Kidney (tissue), 22 donors: ENCODE measurements at regions of chr13 and their contacts with region 1.

Region 1: DNA sequence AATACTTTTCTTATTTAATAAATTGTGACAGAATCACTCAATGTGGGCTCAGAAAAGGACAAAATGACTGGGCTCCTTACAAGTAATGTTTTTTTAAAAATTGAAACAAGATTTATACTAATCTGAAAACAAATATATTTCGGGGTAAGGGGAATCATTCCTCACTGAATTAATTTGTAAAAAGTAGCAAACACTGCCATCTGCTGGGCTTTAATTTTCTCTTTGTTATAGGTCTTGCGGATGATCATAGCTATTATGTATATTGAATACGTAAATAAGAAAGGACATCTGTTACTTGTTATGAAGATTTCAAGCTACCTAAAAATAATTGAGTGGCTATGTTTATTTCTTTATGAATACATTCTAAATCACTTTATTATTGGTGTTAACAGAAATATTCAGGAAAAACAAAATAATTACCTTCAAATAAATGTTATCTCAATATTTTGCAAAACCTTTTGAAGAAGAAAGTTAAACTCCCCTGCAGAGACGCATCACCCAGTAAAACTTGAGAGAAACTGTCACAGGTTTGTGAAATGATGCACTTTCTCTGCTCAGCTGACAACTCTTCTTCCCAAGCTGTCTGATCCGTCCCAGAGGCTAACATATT is 17.8 kb upstream of the ENOX1 start:
- DNase-seq: peak in 2 of 5 donors; percentile 85 to 88
- H3K4me3 ChIP-seq: no peak overlapping the region
- H3K27ac ChIP-seq: no peak overlapping the region
- H3K4me1 ChIP-seq: no peaks in the 10 kb centered on the region
- H3K27me3 ChIP-seq: no peaks in the 10 kb centered on the region
- CTCF ChIP-seq: peak; percentile 53

Region 2: GRCh38 chr13:43303033-43303729 is 501.4 kb before region 1 on chr13:
- intact Hi-C with region 1: loop called (anchors 10 kb)
- DNase-seq: peak; percentile 71 to 86 (median 77)
- H3K4me3 ChIP-seq: no peak overlapping the region
- H3K27ac ChIP-seq: no peak overlapping the region
- H3K4me1 ChIP-seq: peaks cover 0 to 3% (median 3%) of the 10 kb centered on the region in 3 donors
- H3K27me3 ChIP-seq: no peaks in the 10 kb centered on the region
- CTCF ChIP-seq: peak; percentile 66

Region 3: DNA sequence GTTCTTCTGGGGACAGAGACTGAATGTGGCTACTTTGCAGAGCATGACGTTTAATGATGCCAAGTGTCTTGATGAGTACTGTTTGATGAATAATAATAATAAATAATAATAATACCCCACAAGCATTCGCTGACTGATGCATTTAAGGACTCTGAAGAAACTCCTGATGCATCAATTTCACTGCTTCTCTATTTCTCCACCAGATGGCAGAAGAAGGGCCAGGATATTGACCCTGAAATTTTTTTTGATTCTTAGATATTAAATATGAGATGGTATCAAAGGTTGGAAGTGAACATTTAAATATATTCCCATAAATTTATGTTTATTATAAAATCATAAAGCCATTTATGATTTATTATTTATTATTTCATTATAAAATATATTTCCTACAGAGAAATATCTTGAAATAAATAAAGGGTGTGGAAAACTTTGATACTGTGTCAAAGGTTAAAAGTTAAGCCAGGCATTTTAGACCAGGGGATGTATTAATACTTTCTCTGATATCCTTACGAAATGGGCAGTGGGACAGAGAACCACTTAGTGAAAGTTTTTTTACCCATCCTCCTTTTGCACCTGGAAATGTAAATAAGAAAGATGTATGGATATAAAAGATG is 246.0 kb after region 1 on chr13:
- intact Hi-C with region 1: no loop called
- DNase-seq: peak in 1 of 5 donors; percentile 61
- H3K4me3 ChIP-seq: no peak overlapping the region
- H3K27ac ChIP-seq: no peak overlapping the region
- H3K4me1 ChIP-seq: peaks cover 0 to 9% (median 6%) of the 10 kb centered on the region in 3 donors
- H3K27me3 ChIP-seq: no peaks in the 10 kb centered on the region
- CTCF ChIP-seq: peak; percentile 71

Region 4: GRCh38 chr13:44410346-44410859 is 605.8 kb after region 1 on chr13:
- intact Hi-C with region 1: no loop called
- DNase-seq: no peak
- H3K4me3 ChIP-seq: no peak overlapping the region
- H3K27ac ChIP-seq: no peak overlapping the region
- H3K4me1 ChIP-seq: no peaks in the 10 kb centered on the region
- H3K27me3 ChIP-seq: no peaks in the 10 kb centered on the region
- CTCF ChIP-seq: no peak